CD4-positive, alpha-beta T cell (primary cell): ENCODE measurements at regions of chr6 and their contacts with region 1.

Region 1: GRCh38 chr6:72411872-72412708 is 209.8 kb upstream of the KCNQ5 start:
- DNase-seq: peak; percentile 50 to 87 (median 67)
- ATAC-seq: peak; percentile 99
- H3K4me3 ChIP-seq: no peak overlapping the region
- H3K4me3 Mint-ChIP-seq: no peak overlapping the region
- H3K27ac ChIP-seq: no peak overlapping the region
- H3K27ac Mint-ChIP-seq: no peak overlapping the region
- H3K4me1 ChIP-seq: no peaks in the 10 kb centered on the region
- H3K4me1 Mint-ChIP-seq: no peaks in the 10 kb centered on the region
- H3K27me3 ChIP-seq: no peaks in the 10 kb centered on the region
- H3K27me3 Mint-ChIP-seq: peaks cover 11% of the 10 kb centered on the region
- CTCF ChIP-seq: peak; percentile 100

Region 2: GRCh38 chr6:72260489-72260888 is 151.6 kb before region 1 on chr6:
- CTCF ChIA-PET with region 1: no interaction called
- POLR2A ChIA-PET with region 1: no interaction called
- intact Hi-C with region 1: no loop called
- DNase-seq: no peak
- ATAC-seq: no peak
- H3K4me3 ChIP-seq: no peak overlapping the region
- H3K4me3 Mint-ChIP-seq: no peak overlapping the region
- H3K27ac ChIP-seq: no peak overlapping the region
- H3K27ac Mint-ChIP-seq: no peak overlapping the region
- H3K4me1 ChIP-seq: no peaks in the 10 kb centered on the region
- H3K4me1 Mint-ChIP-seq: no peaks in the 10 kb centered on the region
- H3K27me3 ChIP-seq: no peaks in the 10 kb centered on the region
- H3K27me3 Mint-ChIP-seq: no peaks in the 10 kb centered on the region
- CTCF ChIP-seq: no peak

Region 3: GRCh38 chr6:72422171-72422570 is 10.1 kb after region 1 on chr6:
- CTCF ChIA-PET with region 1: interaction called, 10 read pairs
- POLR2A ChIA-PET with region 1: no interaction called
- intact Hi-C with region 1: no loop called
- DNase-seq: no peak
- ATAC-seq: no peak
- H3K4me3 ChIP-seq: no peak overlapping the region
- H3K4me3 Mint-ChIP-seq: no peak overlapping the region
- H3K27ac ChIP-seq: no peak overlapping the region
- H3K27ac Mint-ChIP-seq: no peak overlapping the region
- H3K4me1 ChIP-seq: no peaks in the 10 kb centered on the region
- H3K4me1 Mint-ChIP-seq: no peaks in the 10 kb centered on the region
- H3K27me3 ChIP-seq: peaks cover 0 to 3% of the 10 kb centered on the region in 2 experiments
- H3K27me3 Mint-ChIP-seq: peaks cover 5% of the 10 kb centered on the region
- CTCF ChIP-seq: no peak

Region 4: GRCh38 chr6:72622094-72622940 is 210.2 kb after region 1 on chr6:
- CTCF ChIA-PET with region 1: no interaction called
- POLR2A ChIA-PET with region 1: no interaction called
- intact Hi-C with region 1: loop called (anchors 10 kb)
- DNase-seq: peak in 12 of 14 experiments; percentile 34 to 78 (median 50)
- ATAC-seq: peak; percentile 33
- H3K4me3 ChIP-seq: peak overlapping the region; percentile 77
- H3K4me3 Mint-ChIP-seq: peak overlapping the region; percentile 95
- H3K27ac ChIP-seq: no peak overlapping the region
- H3K27ac Mint-ChIP-seq: peak overlapping the region; percentile 24
- H3K4me1 ChIP-seq: peaks cover 37% of the 10 kb centered on the region
- H3K4me1 Mint-ChIP-seq: peaks cover 45% of the 10 kb centered on the region
- H3K27me3 ChIP-seq: no peaks in the 10 kb centered on the region
- H3K27me3 Mint-ChIP-seq: peaks cover 21% of the 10 kb centered on the region
- CTCF ChIP-seq: peak; percentile 0

Region 5: DNA sequence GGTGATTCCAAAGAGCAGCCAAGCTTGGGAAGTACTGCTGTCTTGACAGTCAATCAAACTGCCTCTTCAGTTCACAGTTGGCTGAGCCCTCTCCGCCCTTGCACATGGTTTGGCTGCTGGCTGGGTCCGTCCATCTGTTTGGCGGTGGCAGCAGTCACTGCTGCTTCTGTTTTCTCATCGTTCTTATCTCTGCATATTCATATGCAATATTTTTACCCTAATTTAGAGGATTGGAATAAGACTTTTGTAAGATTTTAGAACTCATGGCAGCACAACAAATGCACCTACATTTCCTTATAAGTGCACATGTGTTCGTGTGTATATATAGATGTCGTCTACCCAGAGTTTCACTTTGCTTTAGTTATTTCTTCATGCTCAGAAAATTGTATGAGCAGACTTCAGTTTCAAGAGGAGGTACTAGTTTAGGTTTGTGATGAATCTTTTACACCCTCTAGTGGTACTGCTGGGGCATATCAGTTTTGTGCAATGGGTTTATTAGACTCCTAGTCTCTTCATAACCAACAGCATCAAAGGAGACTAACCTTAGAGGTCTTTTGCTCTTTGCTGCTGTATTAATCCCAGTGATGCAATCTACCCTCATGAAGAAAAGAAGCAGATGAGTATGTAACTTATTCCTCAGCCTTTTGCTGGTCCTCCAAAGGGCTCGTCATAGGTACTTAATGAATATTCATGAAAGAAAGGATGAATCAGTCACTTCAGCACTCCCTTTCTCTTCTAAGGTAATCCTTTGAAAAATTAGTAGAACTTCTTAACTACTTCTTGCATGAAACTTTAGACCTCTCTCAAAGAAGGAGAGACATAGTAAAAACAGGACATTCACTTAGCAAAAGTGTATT is 768.9 kb after region 1 on chr6:
- CTCF ChIA-PET with region 1: interaction called, 3 read pairs
- POLR2A ChIA-PET with region 1: no interaction called
- intact Hi-C with region 1: loop called (anchors 1 to 5 kb)
- DNase-seq: peak in 4 of 14 experiments; percentile 5 to 60 (median 58)
- ATAC-seq: peak; percentile 67
- H3K4me3 ChIP-seq: no peak overlapping the region
- H3K4me3 Mint-ChIP-seq: peak overlapping the region; percentile 16
- H3K27ac ChIP-seq: no peak overlapping the region
- H3K27ac Mint-ChIP-seq: no peak overlapping the region
- H3K4me1 ChIP-seq: peaks cover 3% of the 10 kb centered on the region
- H3K4me1 Mint-ChIP-seq: no peaks in the 10 kb centered on the region
- H3K27me3 ChIP-seq: no peaks in the 10 kb centered on the region
- H3K27me3 Mint-ChIP-seq: no peaks in the 10 kb centered on the region
- CTCF ChIP-seq: peak; percentile 80

Region 6: GRCh38 chr6:73481969-73482368 is 1069.9 kb after region 1 on chr6:
- CTCF ChIA-PET with region 1: no interaction called
- POLR2A ChIA-PET with region 1: no interaction called
- intact Hi-C with region 1: no loop called
- DNase-seq: no peak
- ATAC-seq: no peak
- H3K4me3 ChIP-seq: no peak overlapping the region
- H3K4me3 Mint-ChIP-seq: no peak overlapping the region
- H3K27ac ChIP-seq: no peak overlapping the region
- H3K27ac Mint-ChIP-seq: no peak overlapping the region
- H3K4me1 ChIP-seq: no peaks in the 10 kb centered on the region
- H3K4me1 Mint-ChIP-seq: peaks cover 4% of the 10 kb centered on the region
- H3K27me3 ChIP-seq: no peaks in the 10 kb centered on the region
- H3K27me3 Mint-ChIP-seq: no peaks in the 10 kb centered on the region
- CTCF ChIP-seq: no peak